ENCODE measurements at regions of chr1 and their contacts with region 1.

Region 1: DNA sequence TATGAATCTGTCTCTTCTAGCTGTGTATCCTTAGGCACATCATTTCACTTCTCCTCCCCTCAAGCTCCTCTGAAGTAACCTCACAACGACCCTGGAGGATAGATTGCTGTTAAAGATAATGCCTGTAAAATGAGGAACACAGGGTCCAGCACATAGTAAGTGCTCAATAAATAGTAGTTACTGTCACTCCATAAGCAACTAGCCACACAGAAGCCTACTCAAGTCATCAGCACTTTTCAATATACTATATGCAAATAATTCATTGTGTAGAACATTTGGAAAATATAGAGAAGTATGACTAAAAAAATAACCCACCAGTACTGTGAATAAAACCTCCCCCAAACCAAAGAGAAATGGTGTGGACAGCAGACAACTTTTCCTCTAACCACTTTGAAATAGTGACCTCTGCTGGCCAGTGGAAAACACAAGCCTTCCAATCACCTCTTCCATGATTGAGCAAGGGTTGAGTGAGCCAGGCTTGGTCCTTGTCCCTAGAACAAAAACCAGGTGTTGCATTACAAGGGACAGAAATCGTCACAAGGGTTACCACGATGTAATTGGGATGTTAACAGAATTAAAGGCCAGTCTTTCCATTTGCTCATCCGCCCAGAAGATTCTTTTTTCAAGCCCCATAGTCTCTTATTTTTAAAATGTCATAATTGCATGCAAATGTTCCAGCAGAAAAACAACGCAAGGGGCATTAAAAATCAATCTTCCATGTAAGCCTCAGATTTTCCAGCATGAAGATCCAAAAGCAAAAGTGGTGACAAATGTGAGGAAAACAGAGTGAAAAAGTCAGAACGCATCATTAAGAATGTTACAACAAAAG is 15.7 kb upstream of the GLIS1 start:
- DNase-seq: no peak
- H3K4me3 ChIP-seq: no peak overlapping the region
- H3K27me3 ChIP-seq: no peaks in the 10 kb centered on the region
- CTCF ChIP-seq: peak; percentile 78

Region 2: GRCh38 chr1:53670624-53671023 is 84.1 kb before region 1 on chr1:
- CTCF ChIA-PET with region 1: no interaction called
- POLR2A ChIA-PET with region 1: no interaction called
- DNase-seq: no peak
- H3K4me3 ChIP-seq: no peak overlapping the region
- H3K27me3 ChIP-seq: no peaks in the 10 kb centered on the region; the same call in 1 of the 2 replicates
- CTCF ChIP-seq: no peak

Region 3: GRCh38 chr1:53715478-53715877 is 39.2 kb before region 1 on chr1:
- CTCF ChIA-PET with region 1: interaction called, 25 read pairs
- POLR2A ChIA-PET with region 1: no interaction called
- DNase-seq: no peak
- H3K4me3 ChIP-seq: no peak overlapping the region
- H3K27me3 ChIP-seq: no peaks in the 10 kb centered on the region
- CTCF ChIP-seq: peak; percentile 54

Region 4: DNA sequence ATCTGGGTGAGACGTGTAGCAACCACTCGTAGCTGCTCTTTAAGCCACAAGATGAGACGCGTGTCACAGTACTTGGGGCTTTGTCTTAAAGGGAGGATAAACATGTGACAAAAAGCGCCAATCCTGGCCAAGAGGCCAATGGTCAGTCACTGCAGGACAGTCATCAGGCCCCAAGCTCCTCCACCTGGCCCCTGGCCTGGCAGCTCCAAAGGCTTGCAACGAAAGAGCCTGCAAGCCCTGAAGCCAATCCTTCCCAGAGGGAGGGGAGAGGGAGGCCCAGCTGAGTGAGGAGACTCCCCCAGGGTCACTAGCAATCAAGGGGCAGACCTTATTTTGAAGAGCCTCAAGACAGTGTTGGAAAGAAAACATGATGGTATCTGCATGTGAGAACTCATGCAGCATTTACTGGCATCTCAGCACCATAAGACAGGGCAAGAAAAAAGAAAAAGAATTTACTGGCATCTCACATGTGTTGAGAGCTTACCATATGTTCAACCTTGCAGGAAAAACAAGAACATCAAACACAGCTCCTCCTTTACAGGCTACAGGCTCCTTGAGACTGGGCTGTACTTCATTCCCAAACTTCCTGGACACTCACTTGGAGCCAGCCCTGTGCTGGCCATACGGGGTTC is 27.1 kb before region 1 on chr1:
- CTCF ChIA-PET with region 1: no interaction called
- POLR2A ChIA-PET with region 1: no interaction called
- DNase-seq: no peak
- H3K4me3 ChIP-seq: no peak overlapping the region
- H3K27me3 ChIP-seq: no peaks in the 10 kb centered on the region
- CTCF ChIP-seq: no peak

Region 5: DNA sequence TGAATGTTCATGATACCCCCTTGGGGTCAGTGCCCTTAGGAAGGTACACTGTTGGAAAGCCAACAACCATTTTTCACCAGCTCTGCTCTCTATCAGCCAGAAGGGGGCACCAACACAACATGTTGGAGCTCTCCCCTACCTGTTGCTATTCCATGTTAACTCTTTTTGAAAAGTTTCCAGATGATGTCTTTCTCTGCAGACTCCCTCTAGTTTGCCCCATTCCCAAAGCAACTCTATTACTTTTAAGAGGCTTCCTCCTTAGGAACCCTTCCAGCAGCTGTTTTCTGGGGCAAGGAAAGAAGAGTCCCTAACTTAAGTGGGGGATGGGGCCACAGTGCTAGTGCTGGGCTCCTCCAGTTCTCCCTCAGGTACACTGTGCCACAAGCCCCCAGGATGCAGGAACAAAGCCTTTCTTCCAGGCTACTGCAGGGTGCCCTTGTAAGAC is 106.3 kb after region 1 on chr1:
- CTCF ChIA-PET with region 1: no interaction called
- POLR2A ChIA-PET with region 1: no interaction called
- DNase-seq: no peak
- H3K4me3 ChIP-seq: no peak overlapping the region
- H3K27me3 ChIP-seq: no peaks in the 10 kb centered on the region
- CTCF ChIP-seq: peak; percentile 83

Region 6: GRCh38 chr1:53982034-53982762 is 227.5 kb after region 1 on chr1:
- CTCF ChIA-PET with region 1: no interaction called
- POLR2A ChIA-PET with region 1: no interaction called
- DNase-seq: peak; percentile 25
- H3K4me3 ChIP-seq: peak overlapping the region; percentile 24; the same call in 1 of the 2 replicates
- H3K27me3 ChIP-seq: no peaks in the 10 kb centered on the region
- CTCF ChIP-seq: no peak